Aorta (tissue), 5 donors: ENCODE measurements at regions of chr3 and their contacts with region 1.

Region 1: DNA sequence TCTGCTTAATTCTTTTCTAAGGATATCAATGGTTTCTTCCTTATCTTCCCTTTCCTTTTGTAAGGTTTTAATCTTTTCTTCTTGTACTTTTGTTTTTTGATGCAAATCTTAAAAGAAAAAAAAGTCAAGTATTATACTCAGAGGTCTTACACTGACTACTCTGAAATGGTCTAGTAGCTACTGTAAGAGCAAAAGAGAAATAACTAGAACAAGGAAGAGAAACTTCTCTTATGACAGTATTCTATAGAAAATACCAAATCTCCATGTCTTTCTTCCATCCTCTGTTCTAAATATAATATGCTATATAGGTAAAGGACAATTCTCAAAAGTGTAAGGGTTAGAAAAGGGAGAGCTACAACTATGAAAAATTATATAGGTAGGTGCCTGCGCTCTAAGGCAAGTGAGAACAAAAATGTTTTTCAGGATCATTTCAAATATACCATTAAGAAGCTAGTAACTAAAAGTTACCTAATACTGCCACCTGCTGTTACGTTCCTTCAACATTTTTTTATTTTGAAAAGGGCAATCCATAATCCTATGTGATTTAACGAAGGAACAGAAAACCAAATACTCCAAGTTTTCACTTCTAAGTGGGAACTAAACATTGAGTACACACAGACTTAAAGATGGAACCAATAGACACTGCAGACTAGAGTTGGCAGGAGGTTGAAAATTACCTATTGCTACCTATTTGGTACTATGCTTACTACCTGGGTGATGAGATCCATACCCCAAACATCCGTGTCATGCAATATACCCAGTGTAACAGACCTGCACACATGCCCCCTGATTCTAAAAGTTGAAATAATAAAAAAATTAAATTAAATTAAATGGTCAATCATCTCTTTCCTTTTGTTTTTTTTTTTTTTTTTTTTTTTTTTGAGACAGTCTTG is 36.7 kb downstream of the CIP2A start:
- DNase-seq: no peak
- ATAC-seq: peak; percentile 76
- H3K4me3 ChIP-seq: no peak overlapping the region
- H3K27ac ChIP-seq: no peak overlapping the region
- H3K4me1 ChIP-seq: no peaks in the 10 kb centered on the region
- H3K27me3 ChIP-seq: no peaks in the 10 kb centered on the region

Region 2: GRCh38 chr3:108489771-108490170 is 62.7 kb before region 1 on chr3:
- intact Hi-C with region 1: loop called (anchors 1 to 2 kb)
- DNase-seq: no peak
- ATAC-seq: peak; percentile 61
- H3K4me3 ChIP-seq: no peak overlapping the region
- H3K27ac ChIP-seq: no peak overlapping the region
- H3K4me1 ChIP-seq: peaks cover 0 to under 1% of the 10 kb centered on the region in 2 donors
- H3K27me3 ChIP-seq: no peaks in the 10 kb centered on the region